ENCODE measurements at regions of chr4 and their contacts with region 1.

Region 1: GRCh38 chr4:140523857-140524742 is at the start of gene ELMOD2:
- DNase-seq: peak; percentile 95 to 98 (median 97)
- ATAC-seq: peak; percentile 100
- H3K4me3 ChIP-seq: peak within 1 kb of the TSS; percentile 70
- H3K4me3 Mint-ChIP-seq: peak within 1 kb of the TSS; percentile 78 to 95 (median 88)
- H3K27ac ChIP-seq: peak within 1 kb of the TSS; percentile 71
- H3K27ac Mint-ChIP-seq: peak within 1 kb of the TSS; percentile 78 to 93 (median 86)
- H3K4me1 ChIP-seq: peaks cover 12 to 18% of the 10 kb centered on the region in 2 donors
- H3K4me1 Mint-ChIP-seq: peaks cover 8 to 39% (median 29%) of the 10 kb centered on the region in 7 donors
- H3K27me3 ChIP-seq: no peaks in the 10 kb centered on the region
- H3K27me3 Mint-ChIP-seq: peaks cover 0 to 3% (median 0%) of the 10 kb centered on the region in 5 donors
- total RNA-seq, gene ELMOD2: 12.8 to 29.2 (median 17.7) TPM

Region 2: GRCh38 chr4:139083956-139084803 is 1439.9 kb before region 1 on chr4:
- CTCF ChIA-PET with region 1: no interaction called
- POLR2A ChIA-PET with region 1: no interaction called
- intact Hi-C with region 1: loop called in 1 of 2 experiments (anchors 2 kb)
- DNase-seq: peak; percentile 54 to 88 (median 84)
- ATAC-seq: peak; percentile 64
- H3K4me3 ChIP-seq: peak overlapping the region; percentile 99
- H3K4me3 Mint-ChIP-seq: peak overlapping the region; percentile 90 to 100 (median 92)
- H3K27ac ChIP-seq: peak overlapping the region; percentile 96
- H3K27ac Mint-ChIP-seq: peak overlapping the region; percentile 85 to 100 (median 96)
- H3K4me1 ChIP-seq: peaks cover 16 to 27% of the 10 kb centered on the region in 2 donors
- H3K4me1 Mint-ChIP-seq: peaks cover 16 to 49% (median 41%) of the 10 kb centered on the region in 7 donors
- H3K27me3 ChIP-seq: no peaks in the 10 kb centered on the region
- H3K27me3 Mint-ChIP-seq: no peaks in the 10 kb centered on the region

Region 3: DNA sequence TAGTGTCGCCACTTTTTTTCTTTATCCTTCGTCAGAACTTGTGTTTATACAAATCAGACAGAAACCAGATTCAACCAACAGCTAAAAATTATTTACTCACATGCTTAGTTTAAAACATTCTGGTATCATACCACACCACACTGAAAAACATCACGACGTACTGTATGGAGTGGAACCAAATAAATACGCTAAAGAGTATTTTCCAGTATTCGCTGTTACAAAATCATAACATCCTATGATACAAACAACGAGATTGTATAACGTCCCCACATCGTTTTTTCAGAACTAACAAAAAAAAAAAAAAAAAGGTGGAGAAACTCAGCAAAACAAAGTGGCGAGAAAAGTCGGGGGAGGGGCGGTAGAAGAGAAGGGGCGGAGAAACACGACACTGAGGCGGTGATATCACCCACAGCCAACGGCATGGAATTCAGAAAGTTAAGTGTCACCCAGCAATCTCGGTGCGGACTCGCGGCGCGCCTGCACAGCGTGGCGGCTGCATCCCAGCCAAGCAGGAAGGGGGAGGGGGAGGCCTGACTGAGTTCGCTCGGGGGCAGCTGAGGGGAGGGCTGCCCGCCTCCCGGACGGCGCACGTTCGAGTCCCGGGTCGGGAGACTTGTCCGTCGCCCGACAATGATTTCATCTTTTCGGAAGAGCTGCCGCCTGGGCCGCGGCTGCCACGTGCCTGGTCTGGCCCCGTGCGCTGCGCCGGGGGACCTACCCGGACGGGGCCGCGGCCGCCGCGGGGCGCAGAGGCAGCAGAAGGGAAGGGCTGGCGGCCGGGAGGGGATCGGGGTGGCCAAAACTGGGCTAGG is 969.0 kb before region 1 on chr4:
- CTCF ChIA-PET with region 1: no interaction called
- POLR2A ChIA-PET with region 1: no interaction called
- intact Hi-C with region 1: loop called (anchors 2 kb)
- DNase-seq: peak; percentile 65 to 93 (median 88)
- ATAC-seq: peak; percentile 85
- H3K4me3 ChIP-seq: peak overlapping the region; percentile 68
- H3K4me3 Mint-ChIP-seq: peak overlapping the region; percentile 89 to 99 (median 98)
- H3K27ac ChIP-seq: peak overlapping the region; percentile 76
- H3K27ac Mint-ChIP-seq: peak overlapping the region; percentile 86 to 98 (median 97)
- H3K4me1 ChIP-seq: peaks cover 4 to 11% of the 10 kb centered on the region in 2 donors
- H3K4me1 Mint-ChIP-seq: peaks cover 19 to 49% (median 40%) of the 10 kb centered on the region in 7 donors
- H3K27me3 ChIP-seq: no peaks in the 10 kb centered on the region
- H3K27me3 Mint-ChIP-seq: peaks cover 0 to 11% (median 0%) of the 10 kb centered on the region in 5 donors

Region 4: DNA sequence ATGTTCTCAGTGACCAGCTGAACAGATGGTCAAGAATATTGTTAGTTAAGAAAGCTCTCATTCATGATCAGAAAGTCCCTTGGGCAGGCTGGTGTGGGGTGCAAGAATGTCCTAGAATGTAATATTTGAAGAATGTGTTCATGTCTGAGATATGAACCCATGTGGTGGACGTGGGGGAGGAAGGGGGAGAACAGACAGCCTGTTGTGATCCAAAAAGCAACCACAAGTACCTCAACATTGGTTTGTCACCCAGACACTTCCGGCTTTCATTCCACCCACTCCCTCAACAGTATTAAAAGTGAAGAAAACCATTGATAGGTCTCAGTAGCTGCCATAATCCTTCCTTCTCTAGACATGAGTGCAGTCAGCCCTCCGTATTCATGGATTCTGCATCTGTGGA is 452.3 kb before region 1 on chr4:
- CTCF ChIA-PET with region 1: no interaction called
- POLR2A ChIA-PET with region 1: no interaction called
- intact Hi-C with region 1: loop called in 1 of 2 experiments (anchors 2 kb)
- DNase-seq: peak in 8 of 9 donors; percentile 62 to 84 (median 78)
- ATAC-seq: peak; percentile 91
- H3K4me3 ChIP-seq: peak overlapping the region; percentile 33
- H3K4me3 Mint-ChIP-seq: peak overlapping the region; percentile 69 to 91 (median 82)
- H3K27ac ChIP-seq: peak overlapping the region; percentile 54
- H3K27ac Mint-ChIP-seq: peak overlapping the region; percentile 84 to 98 (median 91)
- H3K4me1 ChIP-seq: peaks cover 18 to 30% of the 10 kb centered on the region in 2 donors
- H3K4me1 Mint-ChIP-seq: peaks cover 41 to 61% (median 56%) of the 10 kb centered on the region in 7 donors
- H3K27me3 ChIP-seq: no peaks in the 10 kb centered on the region
- H3K27me3 Mint-ChIP-seq: peaks cover 0 to 59% (median 0%) of the 10 kb centered on the region in 5 donors

Region 5: GRCh38 chr4:140556372-140557085 is 32.4 kb after region 1 on chr4:
- CTCF ChIA-PET with region 1: no interaction called
- POLR2A ChIA-PET with region 1: no interaction called
- intact Hi-C with region 1: loop called in 1 of 2 experiments (anchors 1 kb)
- DNase-seq: peak in 4 of 9 donors; percentile 10 to 37 (median 33)
- ATAC-seq: peak; percentile 91
- H3K4me3 ChIP-seq: no peak overlapping the region
- H3K4me3 Mint-ChIP-seq: no peak overlapping the region
- H3K27ac ChIP-seq: no peak overlapping the region
- H3K27ac Mint-ChIP-seq: peak overlapping the region in 1 of 9 donors; percentile 3
- H3K4me1 ChIP-seq: no peaks in the 10 kb centered on the region
- H3K4me1 Mint-ChIP-seq: peaks cover 6 to 22% (median 20%) of the 10 kb centered on the region in 7 donors
- H3K27me3 ChIP-seq: no peaks in the 10 kb centered on the region
- H3K27me3 Mint-ChIP-seq: peaks cover 0 to 38% (median 0%) of the 10 kb centered on the region in 5 donors

Region 6: GRCh38 chr4:140637836-140638235 is 113.7 kb after region 1 on chr4:
- CTCF ChIA-PET with region 1: no interaction called
- POLR2A ChIA-PET with region 1: no interaction called
- intact Hi-C with region 1: loop called in 1 of 2 experiments (anchors 5 kb)
- DNase-seq: peak in 5 of 9 donors; percentile 4 to 34 (median 27)
- ATAC-seq: peak; percentile 71
- H3K4me3 ChIP-seq: no peak overlapping the region
- H3K4me3 Mint-ChIP-seq: no peak overlapping the region
- H3K27ac ChIP-seq: no peak overlapping the region
- H3K27ac Mint-ChIP-seq: no peak overlapping the region
- H3K4me1 ChIP-seq: no peaks in the 10 kb centered on the region
- H3K4me1 Mint-ChIP-seq: peaks cover 0 to 2% (median 0%) of the 10 kb centered on the region in 7 donors
- H3K27me3 ChIP-seq: no peaks in the 10 kb centered on the region
- H3K27me3 Mint-ChIP-seq: peaks cover 6 to 24% (median 19%) of the 10 kb centered on the region in 5 donors